HepG2 (cell line): ENCODE measurements at regions of chr17 and their contacts with region 1.

Region 1: GRCh38 chr17:51120739-51121617 is at the start of gene SPAG9:
- DNase-seq: peak; percentile 90
- ATAC-seq: peak; percentile 73
- H3K4me3 ChIP-seq: peak within 1 kb of the TSS; percentile 81 to 100 (median 97)
- H3K27ac ChIP-seq: peak within 1 kb of the TSS; percentile 90
- H3K4me1 ChIP-seq: peaks cover 65% of the 10 kb centered on the region
- H3K27me3 ChIP-seq: peaks cover 0 to 3% of the 10 kb centered on the region in 2 experiments; a peak in 1 of 5 replicates
- CTCF ChIP-seq: no peak
- EP300 ChIP-seq: peak in 1 of 2 experiments; percentile 68; a peak in 1 of 4 replicates
- POLR2A ChIP-seq: peak; percentile 65 to 83; a peak in 3 of 4 replicates
- RAD21 ChIP-seq: no peak
- total RNA-seq, gene SPAG9: 78.6 and 84.0 TPM in 2 replicates

Region 2: GRCh38 chr17:50806141-50806643 is 314.8 kb before region 1 on chr17:
- CTCF ChIA-PET with region 1: no interaction called
- POLR2A ChIA-PET with region 1: no interaction called
- in situ Hi-C with region 1: no loop called
- intact Hi-C with region 1: no loop called
- DNase-seq: peak; percentile 73
- ATAC-seq: peak; percentile 70
- H3K4me3 ChIP-seq: peak overlapping the region in 1 of 3 experiments; percentile 29; a peak in 1 of 6 replicates
- H3K27ac ChIP-seq: peak overlapping the region; percentile 15
- H3K4me1 ChIP-seq: peaks cover 83% of the 10 kb centered on the region
- H3K27me3 ChIP-seq: peaks cover 2 to 9% of the 10 kb centered on the region in 2 experiments; a peak in 3 of 5 replicates
- CTCF ChIP-seq: peak; percentile 74
- EP300 ChIP-seq: peak in 1 of 2 experiments; percentile 75; a peak in 1 of 4 replicates
- POLR2A ChIP-seq: no peak
- RAD21 ChIP-seq: peak; percentile 30; the same call in 1 of the 2 replicates

Region 3: DNA sequence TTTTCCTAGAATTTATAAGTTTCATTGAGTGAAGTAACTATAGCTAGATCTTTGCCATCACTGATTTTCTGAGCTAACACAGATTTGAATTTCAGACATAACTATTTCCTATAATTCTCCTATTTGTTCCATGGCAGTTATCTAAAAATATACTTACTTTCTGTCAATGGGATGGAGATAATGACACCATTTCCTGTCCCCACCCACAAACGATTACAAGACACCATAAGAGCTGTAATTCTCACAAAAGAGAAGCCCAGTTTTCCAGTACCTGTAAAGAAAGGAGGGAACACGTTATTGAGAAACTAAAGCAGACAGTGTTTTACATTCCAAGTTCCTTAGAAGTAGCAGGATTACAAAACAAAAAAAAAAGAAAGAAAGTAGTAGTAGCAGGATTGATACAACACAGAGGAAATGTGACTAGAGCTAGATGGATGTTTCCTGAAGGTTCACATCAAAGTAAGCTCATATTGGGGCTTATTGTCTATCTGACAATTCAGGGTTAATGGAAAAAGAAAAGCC is 144.0 kb before region 1 on chr17:
- CTCF ChIA-PET with region 1: no interaction called
- POLR2A ChIA-PET with region 1: no interaction called
- in situ Hi-C with region 1: no loop called
- intact Hi-C with region 1: no loop called
- DNase-seq: no peak
- ATAC-seq: no peak
- H3K4me3 ChIP-seq: no peak overlapping the region
- H3K27ac ChIP-seq: peak overlapping the region; percentile 58
- H3K4me1 ChIP-seq: peaks cover 42% of the 10 kb centered on the region
- H3K27me3 ChIP-seq: no peaks in the 10 kb centered on the region
- CTCF ChIP-seq: no peak
- EP300 ChIP-seq: no peak
- POLR2A ChIP-seq: no peak
- RAD21 ChIP-seq: no peak

Region 4: DNA sequence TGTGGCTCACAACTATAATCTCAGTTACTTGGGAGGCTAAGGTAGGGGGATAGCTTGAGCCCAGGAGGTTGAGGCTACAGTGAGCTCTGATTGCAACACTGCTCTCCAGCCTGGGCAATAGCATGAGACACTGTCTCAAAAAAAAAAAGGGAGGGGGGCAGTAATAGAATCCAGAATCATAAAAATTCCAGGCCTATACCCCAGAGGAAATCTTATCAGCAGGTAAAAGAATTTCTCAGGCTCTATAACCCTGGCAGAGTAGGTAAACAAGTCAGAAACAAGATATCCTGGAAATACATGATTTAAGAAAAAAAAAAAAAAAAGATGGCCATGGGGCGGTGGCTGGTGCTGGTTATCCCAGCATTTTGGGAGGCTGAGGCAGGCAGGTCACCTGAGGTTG is 13.2 kb before region 1 on chr17:
- CTCF ChIA-PET with region 1: no interaction called
- POLR2A ChIA-PET with region 1: interaction called, 39 read pairs
- in situ Hi-C with region 1: no loop called
- intact Hi-C with region 1: no loop called
- DNase-seq: no peak
- ATAC-seq: no peak
- H3K4me3 ChIP-seq: no peak overlapping the region
- H3K27ac ChIP-seq: no peak overlapping the region
- H3K4me1 ChIP-seq: peaks cover 71% of the 10 kb centered on the region
- H3K27me3 ChIP-seq: no peaks in the 10 kb centered on the region
- CTCF ChIP-seq: no peak
- EP300 ChIP-seq: no peak
- POLR2A ChIP-seq: no peak
- RAD21 ChIP-seq: no peak

Region 5: DNA sequence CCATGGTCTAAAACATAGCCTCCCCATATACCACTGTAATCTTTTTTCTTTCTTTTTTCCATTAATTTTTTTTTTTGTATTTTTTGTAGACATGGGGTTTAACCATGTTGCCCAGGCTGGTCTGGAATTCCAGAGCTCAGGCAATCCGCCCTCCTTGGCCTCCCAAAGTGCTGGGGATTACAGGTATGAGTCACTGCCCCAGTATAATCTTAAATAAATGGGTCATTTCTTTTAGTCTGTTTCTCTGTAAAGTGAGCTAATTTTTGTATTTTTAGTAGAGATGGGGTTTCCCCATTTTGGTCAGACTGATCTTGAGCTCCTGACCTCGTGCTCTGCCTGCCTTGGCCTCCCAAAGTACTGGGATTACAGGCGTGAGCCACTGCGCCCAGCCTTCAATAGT is 26.7 kb after region 1 on chr17:
- CTCF ChIA-PET with region 1: interaction called, 14 read pairs
- POLR2A ChIA-PET with region 1: interaction called, 10 read pairs
- in situ Hi-C with region 1: no loop called
- intact Hi-C with region 1: no loop called
- DNase-seq: no peak
- ATAC-seq: no peak
- H3K4me3 ChIP-seq: no peak overlapping the region
- H3K27ac ChIP-seq: no peak overlapping the region
- H3K4me1 ChIP-seq: peaks cover 76% of the 10 kb centered on the region
- H3K27me3 ChIP-seq: no peaks in the 10 kb centered on the region
- CTCF ChIP-seq: no peak
- EP300 ChIP-seq: no peak
- POLR2A ChIP-seq: no peak
- RAD21 ChIP-seq: no peak